ENCODE measurements at regions of chr12 and their contacts with region 1.

Region 1: GRCh38 chr12:119444456-119445044 is 110.0 kb downstream of the CCDC60 start:
- DNase-seq: peak; percentile 63
- ATAC-seq: peak; percentile 62
- H3K4me3 Mint-ChIP-seq: no peak overlapping the region
- H3K27ac Mint-ChIP-seq: no peak overlapping the region
- H3K4me1 Mint-ChIP-seq: no peaks in the 10 kb centered on the region
- H3K27me3 Mint-ChIP-seq: peaks cover 9% of the 10 kb centered on the region
- CTCF ChIP-seq: peak; percentile 96

Region 2: DNA sequence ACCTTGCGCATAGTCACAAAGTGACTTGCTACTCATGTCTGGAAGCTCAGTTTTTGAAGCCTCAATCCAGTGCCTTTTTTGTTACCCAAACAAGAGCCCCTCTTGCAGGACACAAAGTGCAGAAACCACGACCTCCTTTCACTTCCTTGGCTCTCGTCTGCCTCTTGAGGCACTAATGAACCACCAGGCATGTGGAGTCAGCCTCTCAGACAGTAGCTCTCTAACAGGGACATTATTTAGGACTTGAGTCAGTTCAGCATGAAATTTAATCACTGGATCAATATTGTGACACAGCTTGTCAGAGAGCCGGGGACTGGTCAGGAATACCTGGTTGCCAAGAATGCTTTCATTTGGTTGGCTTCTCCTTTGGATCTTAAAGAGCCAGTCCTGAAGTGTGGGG is 219.1 kb before region 1 on chr12:
- CTCF ChIA-PET with region 1: no interaction called
- POLR2A ChIA-PET with region 1: no interaction called
- intact Hi-C with region 1: no loop called
- DNase-seq: no peak
- ATAC-seq: no peak
- H3K4me3 Mint-ChIP-seq: no peak overlapping the region
- H3K27ac Mint-ChIP-seq: no peak overlapping the region
- H3K4me1 Mint-ChIP-seq: no peaks in the 10 kb centered on the region
- H3K27me3 Mint-ChIP-seq: peaks cover 2% of the 10 kb centered on the region
- CTCF ChIP-seq: no peak

Region 3: DNA sequence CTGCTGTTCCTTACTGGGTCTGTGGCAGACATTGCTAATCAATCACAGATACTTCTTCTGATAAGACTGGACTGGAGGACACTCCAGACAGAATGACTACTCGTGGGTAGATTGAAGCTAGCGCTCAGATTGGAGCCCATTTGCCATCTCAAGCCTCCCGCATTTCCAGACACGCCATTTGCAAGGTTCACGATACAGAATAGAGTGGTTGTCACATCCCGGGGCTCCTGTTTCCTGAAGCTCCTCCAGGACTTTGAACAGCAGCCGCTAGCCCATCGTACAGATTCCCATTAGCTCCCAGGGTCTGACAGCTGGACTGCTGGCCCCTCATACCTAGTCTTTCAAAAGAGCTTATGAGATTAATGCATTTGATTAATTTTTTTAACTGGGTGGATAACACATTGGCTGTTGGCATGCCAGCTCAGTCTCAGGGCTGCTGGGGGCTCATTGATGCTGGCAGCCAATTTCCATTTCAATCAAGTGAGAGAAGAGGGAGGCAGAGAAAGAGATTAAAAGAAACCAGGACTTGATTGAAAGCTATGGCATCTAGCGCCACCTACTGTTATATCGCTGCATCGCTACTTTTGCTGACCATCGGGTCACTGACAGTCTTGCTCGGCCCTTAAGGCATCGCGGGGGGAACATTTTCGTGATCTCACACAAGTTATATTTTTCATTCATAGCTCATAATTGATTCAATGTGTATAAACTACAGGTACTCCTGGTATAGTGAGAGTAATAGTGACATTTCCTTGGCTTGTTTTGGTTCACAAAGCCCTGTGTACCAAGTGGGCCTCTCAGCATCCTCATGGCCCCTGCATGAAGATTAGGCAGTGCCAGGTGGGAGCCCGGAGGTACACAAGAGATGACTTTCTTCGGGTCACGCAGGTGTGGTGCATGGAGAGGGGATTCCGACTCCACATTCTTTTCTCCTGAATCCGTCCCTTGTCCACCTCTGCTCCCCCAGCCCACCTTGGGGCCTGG is 31.4 kb before region 1 on chr12:
- CTCF ChIA-PET with region 1: interaction called, 10 read pairs
- POLR2A ChIA-PET with region 1: no interaction called
- intact Hi-C with region 1: no loop called
- DNase-seq: peak; percentile 65
- ATAC-seq: no peak
- H3K4me3 Mint-ChIP-seq: no peak overlapping the region
- H3K27ac Mint-ChIP-seq: no peak overlapping the region
- H3K4me1 Mint-ChIP-seq: no peaks in the 10 kb centered on the region
- H3K27me3 Mint-ChIP-seq: peaks cover 13% of the 10 kb centered on the region
- CTCF ChIP-seq: peak; percentile 80

Region 4: DNA sequence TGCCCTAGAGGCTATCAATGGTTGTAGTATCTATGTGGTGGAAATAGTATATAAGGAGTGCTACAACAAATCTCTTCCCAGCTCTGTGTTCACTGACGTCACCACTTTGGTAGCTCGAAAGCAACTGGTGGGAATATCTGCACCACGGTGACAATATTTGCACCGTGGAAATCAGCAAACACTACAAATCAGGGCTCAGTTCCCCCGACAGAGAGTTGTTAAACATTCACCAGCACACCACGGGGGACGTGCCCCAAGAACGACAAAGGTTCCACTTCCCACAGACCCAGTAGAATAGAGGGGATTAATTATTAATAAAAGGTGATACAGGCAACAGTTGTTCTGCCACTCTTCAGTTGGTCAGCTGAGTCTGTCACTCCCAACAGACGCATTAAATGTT is 11.6 kb before region 1 on chr12:
- CTCF ChIA-PET with region 1: interaction called, 26 read pairs
- POLR2A ChIA-PET with region 1: no interaction called
- intact Hi-C with region 1: no loop called
- DNase-seq: no peak
- ATAC-seq: no peak
- H3K4me3 Mint-ChIP-seq: no peak overlapping the region
- H3K27ac Mint-ChIP-seq: no peak overlapping the region
- H3K4me1 Mint-ChIP-seq: no peaks in the 10 kb centered on the region
- H3K27me3 Mint-ChIP-seq: peaks cover 5% of the 10 kb centered on the region
- CTCF ChIP-seq: no peak

Region 5: GRCh38 chr12:119544765-119545625 is 100.4 kb after region 1 on chr12:
- CTCF ChIA-PET with region 1: interaction called, 80 read pairs
- POLR2A ChIA-PET with region 1: no interaction called
- intact Hi-C with region 1: loop called (anchors 2 kb)
- DNase-seq: peak; percentile 69
- ATAC-seq: peak; percentile 68
- H3K4me3 Mint-ChIP-seq: no peak overlapping the region
- H3K27ac Mint-ChIP-seq: no peak overlapping the region
- H3K4me1 Mint-ChIP-seq: no peaks in the 10 kb centered on the region
- H3K27me3 Mint-ChIP-seq: peaks cover 24% of the 10 kb centered on the region
- CTCF ChIP-seq: peak; percentile 81

Region 6: GRCh38 chr12:119649202-119649808 is 204.8 kb after region 1 on chr12:
- CTCF ChIA-PET with region 1: interaction called, 12 read pairs
- POLR2A ChIA-PET with region 1: no interaction called
- intact Hi-C with region 1: loop called (anchors 10 kb)
- DNase-seq: no peak
- ATAC-seq: no peak
- H3K4me3 Mint-ChIP-seq: no peak overlapping the region
- H3K27ac Mint-ChIP-seq: no peak overlapping the region
- H3K4me1 Mint-ChIP-seq: peaks cover 3% of the 10 kb centered on the region
- H3K27me3 Mint-ChIP-seq: no peaks in the 10 kb centered on the region
- CTCF ChIP-seq: peak; percentile 88

Measured in activated CD8-positive, alpha-beta T cell treated with anti-CD3 and anti-CD28 coated beads for 36 hours (primary cell).